Posterior cingulate gyrus (tissue), 11 donors: ENCODE measurements at regions of chr3 and their contacts with region 1.

Region 1: DNA sequence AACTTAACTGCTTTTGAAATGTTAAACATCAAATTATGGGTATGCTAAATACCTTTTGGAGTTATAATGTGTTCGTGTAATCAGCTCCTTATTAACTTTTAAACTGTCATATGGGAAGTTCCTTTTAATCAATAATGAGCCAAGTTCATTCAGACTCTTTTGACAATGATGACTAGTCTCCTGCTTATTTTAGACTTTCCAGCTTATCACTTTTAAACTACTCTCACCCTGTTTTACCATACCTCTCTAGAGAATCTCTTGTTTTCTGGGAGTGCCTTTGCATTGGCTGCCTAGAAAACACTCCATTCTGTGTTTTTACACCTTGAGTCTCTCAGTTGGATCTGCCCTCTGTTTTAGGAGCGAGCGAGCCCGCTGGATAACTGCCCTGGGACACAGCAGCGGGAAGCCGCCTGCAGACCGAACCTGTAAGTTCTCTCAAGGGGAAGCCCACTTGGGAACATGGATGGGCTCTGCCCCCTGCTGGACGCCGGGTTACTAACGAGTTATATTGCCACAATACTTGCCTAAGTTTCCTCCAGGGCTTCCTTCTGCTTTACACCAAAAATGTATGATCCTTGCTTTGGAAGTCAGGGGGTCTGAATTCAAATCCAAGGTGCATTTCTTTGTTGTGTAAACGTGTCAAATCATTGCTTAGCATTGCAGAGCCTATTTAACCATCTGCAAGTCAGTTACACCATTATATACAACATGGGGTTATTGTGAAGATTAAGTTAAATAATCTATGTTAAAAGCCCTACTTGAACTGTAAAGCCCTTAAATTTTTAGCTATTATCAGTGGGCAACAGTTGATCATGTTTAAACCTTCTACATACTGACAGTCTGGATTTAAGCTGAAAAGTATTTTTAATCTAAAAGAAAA is 71.3 kb downstream of the DHX36 start:
- DNase-seq: peak; percentile 72 to 99 (median 90)

Region 2: GRCh38 chr3:153305189-153305588 is 947.8 kb before region 1 on chr3:
- intact Hi-C with region 1: no loop called
- DNase-seq: no peak

Region 3: GRCh38 chr3:153970741-153971347 is 282.2 kb before region 1 on chr3:
- intact Hi-C with region 1: loop called (anchors 10 kb)
- DNase-seq: no peak

Region 4: DNA sequence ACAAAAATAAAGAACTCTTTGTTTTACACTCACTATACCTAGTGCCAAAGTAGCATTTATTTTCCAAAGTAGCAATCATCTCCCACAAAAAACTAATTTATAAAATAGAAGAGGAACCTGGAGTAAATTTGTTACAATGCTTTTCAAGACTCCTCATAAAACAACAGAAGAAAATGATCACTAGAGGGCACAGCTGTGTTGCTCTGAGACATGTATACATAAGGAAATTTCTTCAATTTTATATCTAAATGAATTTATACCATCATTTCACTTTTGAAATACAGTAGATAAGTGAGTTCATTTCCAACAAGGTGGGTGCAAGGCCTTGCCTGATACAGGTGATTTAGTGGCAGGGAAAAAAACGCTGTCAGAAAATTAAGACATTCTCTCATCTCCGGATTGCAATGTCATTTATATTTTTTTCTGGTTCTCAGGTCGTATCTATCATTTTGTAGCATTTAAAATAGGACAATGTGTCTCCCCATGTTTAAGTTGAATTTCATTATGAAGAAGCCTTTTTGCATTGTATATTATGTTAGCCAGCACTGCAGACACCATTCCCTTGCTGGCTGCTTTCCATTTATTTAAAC is 157.1 kb before region 1 on chr3:
- intact Hi-C with region 1: loop called (anchors 2 kb)
- DNase-seq: no peak